Gastrocnemius medialis (tissue), 4 donors: ENCODE measurements at regions of chr20 and their contacts with region 1.

Region 1: GRCh38 chr20:63973636-63974402 is 4.1 kb upstream of the ZNF512B start:
- DNase-seq: peak; percentile 69 to 76
- ATAC-seq: peak; percentile 73 to 74
- H3K4me3 ChIP-seq: peak overlapping the region; percentile 39 to 53 (median 46)
- H3K27ac ChIP-seq: peak overlapping the region; percentile 59 to 71 (median 62)
- H3K4me1 ChIP-seq: peaks cover 4 to 26% of the 10 kb centered on the region in 2 donors
- H3K27me3 ChIP-seq: peaks cover 0 to 8% (median 4%) of the 10 kb centered on the region in 3 donors
- CTCF ChIP-seq: peak; percentile 96 to 100 (median 97)
- POLR2A ChIP-seq: peak in 1 of 2 donors; percentile 35

Region 2: GRCh38 chr20:63782051-63782471 is 191.8 kb before region 1 on chr20:
- in situ Hi-C with region 1: loop called in 1 of 4 experiments (anchors 10 kb)
- intact Hi-C with region 1: loop called (anchors 1 kb)
- DNase-seq: no peak
- ATAC-seq: no peak
- H3K4me3 ChIP-seq: no peak overlapping the region
- H3K27ac ChIP-seq: no peak overlapping the region
- H3K4me1 ChIP-seq: peaks cover 0 to under 1% of the 10 kb centered on the region in 2 donors
- H3K27me3 ChIP-seq: no peaks in the 10 kb centered on the region
- CTCF ChIP-seq: no peak
- POLR2A ChIP-seq: no peak

Region 3: GRCh38 chr20:63795178-63795830 is 178.5 kb before region 1 on chr20:
- in situ Hi-C with region 1: no loop called
- intact Hi-C with region 1: no loop called
- DNase-seq: no peak
- ATAC-seq: no peak
- H3K4me3 ChIP-seq: no peak overlapping the region
- H3K27ac ChIP-seq: no peak overlapping the region
- H3K4me1 ChIP-seq: no peaks in the 10 kb centered on the region
- H3K27me3 ChIP-seq: no peaks in the 10 kb centered on the region
- CTCF ChIP-seq: no peak
- POLR2A ChIP-seq: no peak

Region 4: GRCh38 chr20:63911176-63911575 is 62.6 kb before region 1 on chr20:
- in situ Hi-C with region 1: no loop called
- intact Hi-C with region 1: loop called (anchors 1 kb)
- DNase-seq: peak; percentile 16 to 54
- ATAC-seq: peak; percentile 66 to 71
- H3K4me3 ChIP-seq: no peak overlapping the region
- H3K27ac ChIP-seq: peak overlapping the region; percentile 10 to 62 (median 50)
- H3K4me1 ChIP-seq: peaks cover 17 to 18% of the 10 kb centered on the region in 2 donors
- H3K27me3 ChIP-seq: no peaks in the 10 kb centered on the region
- CTCF ChIP-seq: no peak
- POLR2A ChIP-seq: no peak

Region 5: DNA sequence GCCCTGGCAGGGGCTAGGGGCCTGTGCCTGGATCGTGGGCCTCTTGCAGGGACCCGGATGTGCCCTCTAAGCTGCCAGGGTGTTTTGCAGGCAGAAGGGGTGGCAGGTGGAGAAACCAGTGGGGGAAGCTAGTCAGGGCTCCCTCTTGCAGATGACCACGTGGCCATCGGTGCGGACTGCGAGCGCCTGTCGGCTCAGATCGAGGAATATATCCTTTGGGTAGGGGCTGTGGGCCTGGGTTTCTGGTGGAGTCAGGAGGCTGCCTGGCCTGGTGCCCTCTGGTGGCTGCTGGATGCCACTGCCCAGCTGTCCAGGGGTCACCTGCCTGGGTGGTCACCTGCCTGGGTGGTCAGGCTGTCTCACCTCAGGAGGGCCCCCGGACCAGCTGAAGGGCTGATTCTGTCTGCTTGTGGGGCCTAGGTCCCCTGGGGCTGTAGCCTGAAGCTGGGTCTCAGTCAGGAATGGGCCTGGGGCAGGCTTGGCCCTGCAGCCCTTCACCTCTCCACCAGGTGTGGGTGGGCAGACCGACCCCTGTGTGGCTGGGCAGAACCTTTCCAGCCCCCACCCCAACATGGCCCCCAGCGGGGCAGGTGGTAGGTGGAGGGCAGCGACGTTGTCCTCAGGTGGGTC is 95.9 kb after region 1 on chr20:
- in situ Hi-C with region 1: no loop called
- intact Hi-C with region 1: no loop called
- DNase-seq: no peak
- ATAC-seq: no peak
- H3K4me3 ChIP-seq: no peak overlapping the region
- H3K27ac ChIP-seq: no peak overlapping the region
- H3K4me1 ChIP-seq: peaks cover 0 to 5% of the 10 kb centered on the region in 2 donors
- H3K27me3 ChIP-seq: no peaks in the 10 kb centered on the region
- CTCF ChIP-seq: peak in 4 of 5 experiments; percentile 32 to 55 (median 37)
- POLR2A ChIP-seq: no peak

Region 6: GRCh38 chr20:64261138-64261537 is 287.3 kb after region 1 on chr20:
- in situ Hi-C with region 1: no loop called
- intact Hi-C with region 1: no loop called
- DNase-seq: peak in 1 of 2 donors; percentile 28
- ATAC-seq: peak; percentile 47 to 68
- H3K4me3 ChIP-seq: peak overlapping the region in 3 of 4 donors; percentile 10 to 23 (median 17)
- H3K27ac ChIP-seq: peak overlapping the region; percentile 18 to 66 (median 48)
- H3K4me1 ChIP-seq: peaks cover 88% of the 10 kb centered on the region in 2 donors
- H3K27me3 ChIP-seq: no peaks in the 10 kb centered on the region
- CTCF ChIP-seq: no peak
- POLR2A ChIP-seq: no peak